Activated T-helper 1 cell treated with anti-CD3 and anti-CD28 coated beads, Interleukin-12 subunit alpha, Interleukin-12 subunit beta, Interleukin-2, Interleukin-4 antibody, amounts not matched to agents 30 ng/mL and 10 ng/mL and 1 ng/mL, durations not matched to agents 14 hours and 24 hours and 36 hours (primary cell): ENCODE measurements at regions of chr16 and their contacts with region 1.

Region 1: DNA sequence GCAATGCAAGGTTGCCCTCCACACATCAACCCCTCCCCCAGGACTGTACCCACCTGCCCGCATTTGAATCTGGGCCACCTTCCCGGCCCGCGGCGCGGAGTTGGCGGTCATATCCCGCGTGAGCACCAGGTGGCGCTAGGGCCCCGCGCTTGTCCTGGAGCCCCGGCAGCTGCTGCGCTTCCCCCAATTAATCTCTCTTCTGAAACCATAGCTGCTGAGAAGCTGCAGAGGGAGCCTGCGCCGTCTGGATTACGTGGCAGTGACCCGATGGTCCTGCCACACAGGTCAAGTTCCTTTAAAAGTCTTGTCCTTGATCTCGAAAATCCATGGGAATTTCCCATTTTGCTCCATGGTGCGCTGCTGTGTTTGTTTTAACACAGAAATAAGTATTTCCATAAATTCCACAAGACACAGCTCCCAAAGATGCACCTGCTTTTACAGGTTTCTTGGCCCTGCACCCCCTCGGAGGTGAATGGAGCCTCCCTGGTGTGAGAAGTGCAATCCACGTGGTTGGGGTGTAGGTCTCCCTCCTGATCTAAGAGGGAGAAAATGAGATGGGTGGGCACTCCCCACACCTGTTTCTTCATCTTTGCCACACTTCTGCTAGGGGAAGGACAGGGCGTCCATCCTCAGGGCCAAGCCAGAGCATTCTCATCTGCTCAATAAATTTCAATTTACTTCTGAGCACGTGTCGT is 22.1 kb downstream of the COX4I1 start:
- DNase-seq: peak; percentile 68
- H3K4me3 Mint-ChIP-seq: no peak overlapping the region
- H3K27ac Mint-ChIP-seq: no peak overlapping the region
- H3K4me1 Mint-ChIP-seq: no peaks in the 10 kb centered on the region
- H3K27me3 Mint-ChIP-seq: peaks cover 8% of the 10 kb centered on the region

Region 2: DNA sequence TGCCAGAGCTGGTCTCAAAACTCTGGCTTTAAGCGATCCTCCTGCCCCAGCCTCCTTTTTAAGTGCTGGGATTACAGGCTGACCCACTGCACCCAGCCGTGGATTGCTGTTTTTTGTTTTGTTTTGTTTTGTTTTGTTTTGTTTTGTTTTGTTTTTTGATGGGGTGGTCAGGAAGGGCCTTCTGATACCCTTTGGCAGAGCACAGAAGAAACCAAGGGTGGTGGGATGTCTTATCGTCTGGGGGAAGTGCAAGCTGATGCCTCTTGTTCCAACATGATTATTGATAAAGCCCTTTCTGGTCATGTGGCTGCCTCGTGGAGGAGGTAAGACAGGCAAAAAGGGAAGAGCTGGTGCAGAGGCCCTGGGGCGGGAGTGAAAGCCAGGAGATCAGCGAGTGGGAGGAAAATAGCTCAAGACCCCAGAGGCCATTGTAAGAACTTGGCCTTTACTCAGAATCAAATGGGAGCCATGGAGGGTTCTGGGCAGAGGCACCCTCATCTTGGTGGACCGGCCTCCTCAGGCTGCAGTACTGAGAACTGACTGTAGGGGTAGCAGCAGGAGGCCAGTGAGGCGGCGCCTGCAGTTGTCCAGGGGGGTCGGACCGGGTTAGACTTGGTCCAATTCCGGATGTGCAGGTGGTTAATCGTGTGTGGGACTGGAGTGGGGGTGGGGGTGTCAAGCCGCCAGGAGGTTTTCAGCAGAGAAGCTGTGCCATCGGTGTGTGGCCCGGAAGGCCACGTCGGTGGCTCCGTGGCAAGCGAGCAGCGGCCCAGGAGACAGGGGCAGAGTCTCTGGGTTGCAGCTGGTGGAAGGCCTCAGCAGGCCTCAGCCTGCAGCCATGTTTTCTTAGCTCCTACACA is 292.8 kb before region 1 on chr16:
- intact Hi-C with region 1: no loop called
- DNase-seq: no peak
- H3K4me3 Mint-ChIP-seq: no peak overlapping the region
- H3K27ac Mint-ChIP-seq: no peak overlapping the region
- H3K4me1 Mint-ChIP-seq: no peaks in the 10 kb centered on the region
- H3K27me3 Mint-ChIP-seq: peaks cover 4% of the 10 kb centered on the region

Region 3: DNA sequence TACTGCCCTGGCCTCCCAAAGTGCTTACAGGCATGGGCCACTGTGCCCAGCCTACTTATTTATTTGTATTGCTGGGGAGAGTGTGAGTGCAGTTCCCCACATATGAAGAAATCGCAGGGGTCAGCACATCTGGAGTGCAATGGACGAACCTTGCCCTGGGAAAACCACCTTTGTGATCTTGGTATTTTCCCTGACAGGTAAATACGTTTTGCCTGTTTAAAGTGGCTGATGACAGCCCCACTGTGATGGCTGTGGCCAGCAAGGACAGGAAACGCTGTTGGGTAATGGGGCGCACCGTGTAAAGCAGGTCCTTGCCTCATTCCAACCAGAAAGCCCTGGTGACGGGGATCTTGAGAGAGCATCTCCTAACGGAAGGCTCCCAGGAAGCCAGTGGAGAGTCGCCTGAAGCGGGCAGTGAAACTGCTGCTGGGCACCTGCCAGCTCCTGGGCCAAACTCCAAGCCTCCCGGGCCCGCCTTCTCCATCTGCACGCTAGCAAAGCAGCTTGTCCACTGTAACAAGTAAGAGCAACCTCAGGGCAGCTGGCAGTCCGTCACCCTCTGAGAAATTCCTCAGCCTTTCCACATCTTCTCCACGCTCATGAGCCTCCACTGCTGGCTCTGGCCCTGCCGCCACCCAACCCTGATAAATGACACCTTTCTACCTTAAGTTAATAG is 39.8 kb before region 1 on chr16:
- intact Hi-C with region 1: no loop called
- DNase-seq: no peak
- H3K4me3 Mint-ChIP-seq: no peak overlapping the region
- H3K27ac Mint-ChIP-seq: no peak overlapping the region
- H3K4me1 Mint-ChIP-seq: peaks cover 6% of the 10 kb centered on the region
- H3K27me3 Mint-ChIP-seq: no peaks in the 10 kb centered on the region

Region 4: GRCh38 chr16:86016201-86016871 is 194.7 kb after region 1 on chr16:
- intact Hi-C with region 1: loop called (anchors 1 kb)
- DNase-seq: peak; percentile 10
- H3K4me3 Mint-ChIP-seq: no peak overlapping the region
- H3K27ac Mint-ChIP-seq: no peak overlapping the region
- H3K4me1 Mint-ChIP-seq: no peaks in the 10 kb centered on the region
- H3K27me3 Mint-ChIP-seq: peaks cover 14% of the 10 kb centered on the region